ENCODE measurements at regions of chr4 and their contacts with region 1.

Region 1: DNA sequence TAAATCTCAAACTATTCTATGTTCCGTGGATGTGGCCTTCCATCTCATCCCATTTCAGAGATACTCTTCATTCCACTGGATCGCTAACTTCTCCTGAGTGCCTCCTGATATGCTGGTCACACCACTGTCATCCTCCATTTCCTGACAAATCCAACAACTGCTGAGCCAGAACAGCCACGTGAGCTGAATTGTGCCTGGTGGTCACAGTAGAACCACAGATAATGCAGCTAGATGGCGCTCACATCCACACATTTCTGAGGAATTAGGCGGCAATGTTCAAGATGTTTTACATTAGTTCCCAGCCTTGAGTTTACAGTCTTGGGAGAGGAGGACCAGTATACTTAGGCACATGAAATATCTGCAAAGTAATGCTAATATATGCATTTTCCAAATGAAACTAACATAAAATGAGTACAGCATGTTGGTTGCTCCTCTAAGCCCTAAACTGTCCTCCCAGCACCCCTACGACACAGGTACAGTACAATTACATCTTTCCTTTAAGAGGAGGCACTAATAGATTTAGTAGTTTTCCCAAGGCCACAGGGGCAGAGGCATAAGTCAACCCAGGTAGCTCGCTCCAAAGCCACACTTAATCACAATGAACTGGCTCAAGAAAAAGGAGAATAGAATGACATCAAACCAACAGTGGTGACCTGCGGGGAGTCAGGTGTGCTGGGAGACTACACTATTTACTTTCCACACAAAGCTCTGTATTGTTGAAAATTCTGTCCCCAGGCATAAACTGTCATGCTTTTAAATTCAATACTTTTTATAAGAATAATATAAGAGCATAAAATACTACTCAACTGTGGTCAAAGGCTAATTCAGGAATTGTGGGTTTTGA is 134.2 kb downstream of the CHIC2 start:
- DNase-seq: peak; percentile 76
- ATAC-seq: peak; percentile 88 to 90

Region 2: GRCh38 chr4:53967986-53968385 is 37.8 kb after region 1 on chr4:
- intact Hi-C with region 1: no loop called
- DNase-seq: no peak
- ATAC-seq: no peak

Region 3: DNA sequence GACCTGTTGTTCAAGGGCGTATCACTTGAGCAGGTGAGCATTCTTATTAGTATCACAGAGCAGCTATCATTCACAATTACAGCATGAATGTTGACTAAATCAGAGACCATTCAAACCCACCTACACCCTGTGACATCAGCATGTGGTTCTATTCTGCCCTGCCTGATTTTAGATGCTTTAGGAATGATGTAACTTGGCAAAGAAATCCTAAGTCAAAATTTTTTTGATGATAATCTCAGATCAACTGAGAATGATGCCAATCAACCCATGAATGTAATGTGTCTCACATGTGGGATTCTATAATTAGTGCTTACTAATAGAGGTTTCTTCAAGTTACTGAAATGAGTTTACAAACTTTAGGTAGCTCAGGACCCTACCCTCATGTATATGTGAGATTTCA is 147.6 kb after region 1 on chr4:
- intact Hi-C with region 1: no loop called
- DNase-seq: no peak
- ATAC-seq: peak in 1 of 2 donors; percentile 23

Region 4: GRCh38 chr4:54091637-54092404 is 161.6 kb after region 1 on chr4:
- intact Hi-C with region 1: loop called in 1 of 2 experiments (anchors 10 kb)
- DNase-seq: peak; percentile 90
- ATAC-seq: peak; percentile 94 to 96

Measured in left cardiac atrium (tissue), 4 donors.